Caco-2 (cell line): ENCODE measurements at regions of chr1 and their contacts with region 1.

Region 1: GRCh38 chr1:94926915-94927404 is at the start of gene CNN3:
- DNase-seq: peak; percentile 91 to 94
- H3K4me3 ChIP-seq: peak within 1 kb of the TSS; percentile 88
- H3K4me3 Mint-ChIP-seq: peak within 1 kb of the TSS; percentile 88
- H3K27ac Mint-ChIP-seq: peak within 1 kb of the TSS; percentile 92
- H3K4me1 ChIP-seq: peaks cover 19% of the 10 kb centered on the region
- H3K4me1 Mint-ChIP-seq: peaks cover 7% of the 10 kb centered on the region
- H3K27me3 ChIP-seq: no peaks in the 10 kb centered on the region
- H3K27me3 Mint-ChIP-seq: no peaks in the 10 kb centered on the region
- CTCF ChIP-seq: no peak
- total RNA-seq, gene CNN3: 286 and 329 TPM in 2 replicates

Region 2: GRCh38 chr1:94863919-94864318 is 63.0 kb before region 1 on chr1:
- CTCF ChIA-PET with region 1: no interaction called
- POLR2A ChIA-PET with region 1: no interaction called
- intact Hi-C with region 1: loop called (anchors 5 kb)
- DNase-seq: peak; percentile 52 to 55
- H3K4me3 ChIP-seq: no peak overlapping the region
- H3K4me3 Mint-ChIP-seq: peak overlapping the region; percentile 64
- H3K27ac Mint-ChIP-seq: peak overlapping the region; percentile 76
- H3K4me1 ChIP-seq: peaks cover 41% of the 10 kb centered on the region
- H3K4me1 Mint-ChIP-seq: peaks cover 43% of the 10 kb centered on the region
- H3K27me3 ChIP-seq: no peaks in the 10 kb centered on the region
- H3K27me3 Mint-ChIP-seq: no peaks in the 10 kb centered on the region
- CTCF ChIP-seq: no peak

Region 3: DNA sequence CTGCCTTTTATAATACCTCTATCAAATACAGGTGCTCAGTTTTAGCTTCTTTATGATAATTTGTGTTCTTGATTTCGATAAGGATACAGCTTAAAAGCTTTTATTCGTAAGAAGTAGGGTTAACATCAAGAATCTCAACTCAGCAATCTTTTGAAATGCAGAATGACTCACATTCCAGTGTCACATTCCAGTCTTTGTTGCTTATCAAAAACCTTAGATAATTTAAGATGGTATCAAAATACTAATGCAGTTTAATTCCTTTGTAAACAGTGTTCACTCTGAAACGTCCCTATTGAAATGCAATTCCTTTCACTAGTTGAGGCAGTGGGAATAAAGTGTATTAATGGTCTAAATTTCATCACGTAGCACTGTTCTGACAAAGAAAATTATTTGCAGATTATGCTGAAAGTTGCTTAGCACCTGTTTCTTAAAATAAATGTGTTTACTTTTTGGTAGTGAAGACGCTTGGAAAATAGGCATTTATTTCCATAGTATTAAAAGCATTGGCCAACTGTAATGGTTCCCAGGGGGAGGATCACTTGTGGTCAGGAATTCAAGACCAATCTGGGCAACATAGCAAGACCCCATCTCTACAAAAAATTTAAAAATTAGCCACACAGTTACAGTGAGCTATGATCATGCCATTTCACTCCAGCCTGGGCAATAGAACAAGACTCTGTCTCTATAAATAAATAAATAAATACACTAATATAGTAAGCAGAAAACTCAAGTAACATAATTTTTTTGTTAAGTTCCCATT is 10.1 kb after region 1 on chr1:
- CTCF ChIA-PET with region 1: no interaction called
- POLR2A ChIA-PET with region 1: interaction called, 4 read pairs
- intact Hi-C with region 1: loop called (anchors 1 kb)
- DNase-seq: peak in 1 of 2 experiments; percentile 39
- H3K4me3 ChIP-seq: no peak overlapping the region
- H3K4me3 Mint-ChIP-seq: peak overlapping the region; percentile 39
- H3K27ac Mint-ChIP-seq: peak overlapping the region; percentile 92
- H3K4me1 ChIP-seq: peaks cover 42% of the 10 kb centered on the region
- H3K4me1 Mint-ChIP-seq: peaks cover 29% of the 10 kb centered on the region
- H3K27me3 ChIP-seq: no peaks in the 10 kb centered on the region
- H3K27me3 Mint-ChIP-seq: no peaks in the 10 kb centered on the region
- CTCF ChIP-seq: no peak

Region 4: GRCh38 chr1:94955767-94956632 is 29.0 kb after region 1 on chr1:
- CTCF ChIA-PET with region 1: no interaction called
- POLR2A ChIA-PET with region 1: no interaction called
- intact Hi-C with region 1: loop called (anchors 2 kb)
- DNase-seq: peak; percentile 60 to 78
- H3K4me3 ChIP-seq: no peak overlapping the region
- H3K4me3 Mint-ChIP-seq: peak overlapping the region; percentile 4
- H3K27ac Mint-ChIP-seq: peak overlapping the region; percentile 88
- H3K4me1 ChIP-seq: peaks cover 35% of the 10 kb centered on the region
- H3K4me1 Mint-ChIP-seq: peaks cover 27% of the 10 kb centered on the region
- H3K27me3 ChIP-seq: no peaks in the 10 kb centered on the region
- H3K27me3 Mint-ChIP-seq: no peaks in the 10 kb centered on the region
- CTCF ChIP-seq: no peak

Region 5: DNA sequence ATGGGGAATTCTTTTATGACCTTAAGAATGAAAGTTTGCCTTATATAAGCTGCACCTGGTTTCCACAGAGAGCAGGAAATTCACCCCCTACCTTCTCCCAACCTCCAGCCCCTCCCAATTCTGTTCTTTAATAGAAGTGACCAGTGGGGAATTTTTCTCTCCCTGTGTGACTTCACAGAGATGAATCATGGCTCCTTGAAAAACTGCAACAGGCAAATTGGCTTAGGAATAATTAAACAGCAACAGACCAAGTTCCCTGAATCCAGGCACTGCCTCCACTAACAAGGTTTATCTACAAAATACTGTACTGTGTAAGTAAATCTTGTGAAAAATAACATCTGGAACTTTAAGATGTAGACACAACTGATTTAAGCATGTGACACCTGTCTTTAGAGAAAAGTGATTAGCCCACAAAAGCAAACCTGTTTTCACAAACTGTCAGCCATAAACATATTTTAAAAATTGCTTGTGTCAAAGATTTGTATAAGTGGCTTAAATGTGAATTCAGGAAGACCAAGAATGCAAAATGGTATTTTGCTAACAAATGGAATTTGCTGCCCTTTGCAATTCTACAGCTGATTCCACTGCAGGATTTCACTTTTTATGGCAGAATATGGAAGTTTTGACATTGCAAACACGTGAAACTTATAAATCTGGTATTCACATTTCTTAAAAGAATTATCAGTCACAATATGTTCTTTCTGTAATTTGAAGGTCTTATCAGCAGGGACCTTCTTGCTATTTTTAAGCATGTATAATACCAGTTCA is 91.8 kb after region 1 on chr1:
- CTCF ChIA-PET with region 1: no interaction called
- POLR2A ChIA-PET with region 1: no interaction called
- intact Hi-C with region 1: loop called (anchors 2 kb)
- DNase-seq: no peak
- H3K4me3 ChIP-seq: no peak overlapping the region
- H3K4me3 Mint-ChIP-seq: no peak overlapping the region
- H3K27ac Mint-ChIP-seq: no peak overlapping the region
- H3K4me1 ChIP-seq: peaks cover 18% of the 10 kb centered on the region
- H3K4me1 Mint-ChIP-seq: peaks cover 11% of the 10 kb centered on the region
- H3K27me3 ChIP-seq: no peaks in the 10 kb centered on the region
- H3K27me3 Mint-ChIP-seq: no peaks in the 10 kb centered on the region
- CTCF ChIP-seq: no peak